Caco-2 (cell line): ENCODE measurements at regions of chr17 and their contacts with region 1.

Region 1: GRCh38 chr17:43170766-43171585 is at the start of gene NBR1:
- DNase-seq: peak; percentile 97 to 98
- H3K4me3 ChIP-seq: peak within 1 kb of the TSS; percentile 59
- H3K4me3 Mint-ChIP-seq: no peak within 1 kb of the TSS
- H3K27ac Mint-ChIP-seq: no peak within 1 kb of the TSS
- H3K4me1 ChIP-seq: peaks cover 39% of the 10 kb centered on the region
- H3K4me1 Mint-ChIP-seq: peaks cover 27% of the 10 kb centered on the region
- H3K27me3 ChIP-seq: no peaks in the 10 kb centered on the region
- H3K27me3 Mint-ChIP-seq: no peaks in the 10 kb centered on the region
- CTCF ChIP-seq: peak; percentile 24 to 44
- total RNA-seq, gene NBR1: 53.9 and 55.4 TPM in 2 replicates

Region 2: DNA sequence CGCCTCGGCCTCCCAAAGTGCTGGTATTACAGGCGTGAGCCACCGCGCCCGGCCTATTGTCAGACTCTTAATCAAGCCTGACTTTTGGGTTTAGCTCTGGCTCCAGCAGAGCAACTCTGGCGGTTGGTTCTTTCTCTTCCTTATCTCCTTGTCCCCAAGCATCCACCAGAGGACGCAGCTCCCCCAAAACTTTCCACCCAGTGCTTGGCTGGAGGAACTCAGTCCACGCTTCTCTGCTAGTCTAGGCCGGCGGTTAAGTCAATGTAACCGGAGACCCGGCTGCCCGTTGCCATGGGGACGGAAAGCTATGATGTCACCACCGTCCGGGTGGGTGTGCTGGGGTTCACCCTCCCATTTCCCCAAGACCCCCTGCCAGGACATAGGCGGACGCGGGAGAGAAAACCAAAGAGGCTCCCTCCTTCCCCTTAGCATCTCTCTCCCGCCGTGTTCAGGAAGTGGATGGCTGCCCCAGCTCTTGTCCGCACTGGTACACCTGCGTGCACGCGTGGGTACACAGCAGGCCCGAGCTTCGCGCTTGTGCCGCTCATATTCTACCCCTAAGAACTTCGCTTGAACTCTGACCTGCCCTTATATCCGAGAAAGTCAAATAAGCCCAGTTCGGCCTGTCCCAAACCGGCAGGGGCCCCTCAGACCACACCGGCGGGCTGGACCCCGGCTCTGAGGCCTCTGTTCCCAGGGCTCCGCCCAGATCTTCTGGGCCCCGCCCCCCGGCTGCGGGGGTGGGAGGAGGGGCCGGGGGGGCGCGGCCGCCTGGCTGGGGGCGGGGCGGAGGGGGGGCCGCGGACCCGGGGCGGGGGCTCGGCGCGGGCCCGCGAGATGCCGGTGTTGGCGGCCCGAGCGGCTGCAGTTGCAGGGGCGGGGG is 146.3 kb before region 1 on chr17 and contains the start of gene RND2:
- CTCF ChIA-PET with region 1: no interaction called
- POLR2A ChIA-PET with region 1: interaction called, 3 read pairs
- intact Hi-C with region 1: loop called (anchors 1 kb)
- DNase-seq: peak; percentile 85 to 88
- H3K4me3 ChIP-seq: peak within 1 kb of the TSS; percentile 53
- H3K4me3 Mint-ChIP-seq: peak within 1 kb of the TSS; percentile 69
- H3K27ac Mint-ChIP-seq: peak within 1 kb of the TSS; percentile 85
- H3K4me1 ChIP-seq: peaks cover 12% of the 10 kb centered on the region
- H3K4me1 Mint-ChIP-seq: peaks cover 2% of the 10 kb centered on the region
- H3K27me3 ChIP-seq: no peaks in the 10 kb centered on the region
- H3K27me3 Mint-ChIP-seq: no peaks in the 10 kb centered on the region
- CTCF ChIP-seq: peak; percentile 34 to 79
- total RNA-seq, gene RND2: 1.2 and 1.7 TPM in 2 replicates

Region 3: GRCh38 chr17:43125133-43125966 is 45.6 kb before region 1 on chr17 and contains the start of gene BRCA1:
- CTCF ChIA-PET with region 1: interaction called, 3 read pairs
- POLR2A ChIA-PET with region 1: interaction called, 10 read pairs
- intact Hi-C with region 1: loop called (anchors 1 kb)
- DNase-seq: peak; percentile 98 to 99
- H3K4me3 ChIP-seq: peak within 1 kb of the TSS; percentile 90
- H3K4me3 Mint-ChIP-seq: peak within 1 kb of the TSS; percentile 98
- H3K27ac Mint-ChIP-seq: peak within 1 kb of the TSS; percentile 99
- H3K4me1 ChIP-seq: peaks cover 18% of the 10 kb centered on the region
- H3K4me1 Mint-ChIP-seq: no peaks in the 10 kb centered on the region
- H3K27me3 ChIP-seq: no peaks in the 10 kb centered on the region
- H3K27me3 Mint-ChIP-seq: no peaks in the 10 kb centered on the region
- CTCF ChIP-seq: no peak
- total RNA-seq, gene BRCA1: 50.8 and 51.1 TPM in 2 replicates

Region 4: DNA sequence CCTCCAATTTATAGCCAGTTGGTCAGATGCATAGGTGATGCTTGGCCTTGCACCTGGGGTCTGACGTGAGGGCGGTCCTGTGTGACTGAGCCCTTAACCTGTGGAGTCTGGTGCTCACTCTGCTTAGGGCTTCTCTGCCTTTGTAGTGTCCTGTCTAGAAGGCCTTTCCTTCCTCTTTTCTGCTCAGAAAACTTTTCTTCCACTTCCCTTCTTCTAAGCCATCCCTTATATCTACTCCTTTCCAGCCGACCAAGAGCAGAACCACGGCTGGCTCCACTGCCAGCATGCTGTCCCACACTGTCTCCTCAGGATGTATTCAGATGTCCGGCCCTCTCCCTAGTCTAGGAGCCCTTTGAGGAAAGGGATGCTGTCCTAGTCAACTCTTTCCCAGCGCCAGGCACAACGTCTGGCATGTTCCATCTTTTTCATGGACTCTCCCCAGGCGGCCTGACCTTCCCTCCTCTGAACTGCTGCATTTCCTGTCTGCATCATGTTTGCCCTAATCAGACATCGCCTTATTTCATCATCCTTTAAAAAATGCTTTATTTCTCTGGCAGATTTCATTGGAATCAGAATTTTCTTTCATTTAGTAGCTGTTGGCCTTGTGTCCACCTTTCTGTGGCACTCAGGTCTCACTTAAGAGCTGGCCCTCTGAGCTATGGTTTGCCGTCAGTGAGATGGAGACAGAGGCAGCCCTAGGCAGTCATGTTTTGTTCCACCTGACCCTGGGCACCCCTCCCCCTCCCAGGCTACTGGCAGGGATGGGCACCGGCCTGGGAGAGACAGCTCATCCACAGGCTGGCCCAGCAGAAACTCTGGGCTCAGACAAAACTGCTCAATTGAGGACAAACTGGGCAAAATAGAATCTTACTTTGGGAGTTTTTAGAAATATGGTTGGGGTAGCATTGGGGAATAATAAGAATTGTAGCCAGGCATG is 30.3 kb before region 1 on chr17:
- CTCF ChIA-PET with region 1: no interaction called
- POLR2A ChIA-PET with region 1: no interaction called
- intact Hi-C with region 1: no loop called
- DNase-seq: no peak
- H3K4me3 ChIP-seq: no peak overlapping the region
- H3K4me3 Mint-ChIP-seq: no peak overlapping the region
- H3K27ac Mint-ChIP-seq: no peak overlapping the region
- H3K4me1 ChIP-seq: no peaks in the 10 kb centered on the region
- H3K4me1 Mint-ChIP-seq: peaks cover 7% of the 10 kb centered on the region
- H3K27me3 ChIP-seq: no peaks in the 10 kb centered on the region
- H3K27me3 Mint-ChIP-seq: no peaks in the 10 kb centered on the region
- CTCF ChIP-seq: no peak

Region 5: DNA sequence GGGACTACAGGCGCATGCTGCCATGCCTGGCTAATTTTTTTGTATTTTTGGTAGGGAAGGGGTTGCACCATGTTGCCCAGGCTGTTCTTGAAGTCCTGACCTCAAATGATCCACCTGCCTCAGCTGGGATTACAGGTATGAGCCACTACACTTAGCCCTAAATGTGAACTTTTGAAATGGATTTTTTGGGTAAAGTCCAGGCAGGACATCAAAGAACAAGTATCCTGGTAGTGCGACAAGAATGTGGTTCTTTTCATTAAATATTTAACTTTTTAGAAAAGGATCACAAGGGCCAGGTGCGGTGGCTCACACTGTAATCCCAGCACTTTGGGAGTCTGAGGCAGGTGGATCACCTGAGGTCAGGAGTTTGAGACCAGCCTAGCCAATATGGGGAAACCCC is 15.3 kb before region 1 on chr17:
- CTCF ChIA-PET with region 1: interaction called, 9 read pairs
- POLR2A ChIA-PET with region 1: interaction called, 4 read pairs
- intact Hi-C with region 1: loop called (anchors 1 kb)
- DNase-seq: peak; percentile 55 to 61
- H3K4me3 ChIP-seq: no peak overlapping the region
- H3K4me3 Mint-ChIP-seq: no peak overlapping the region
- H3K27ac Mint-ChIP-seq: no peak overlapping the region
- H3K4me1 ChIP-seq: peaks cover 18% of the 10 kb centered on the region
- H3K4me1 Mint-ChIP-seq: peaks cover 8% of the 10 kb centered on the region
- H3K27me3 ChIP-seq: no peaks in the 10 kb centered on the region
- H3K27me3 Mint-ChIP-seq: no peaks in the 10 kb centered on the region
- CTCF ChIP-seq: no peak

Region 6: DNA sequence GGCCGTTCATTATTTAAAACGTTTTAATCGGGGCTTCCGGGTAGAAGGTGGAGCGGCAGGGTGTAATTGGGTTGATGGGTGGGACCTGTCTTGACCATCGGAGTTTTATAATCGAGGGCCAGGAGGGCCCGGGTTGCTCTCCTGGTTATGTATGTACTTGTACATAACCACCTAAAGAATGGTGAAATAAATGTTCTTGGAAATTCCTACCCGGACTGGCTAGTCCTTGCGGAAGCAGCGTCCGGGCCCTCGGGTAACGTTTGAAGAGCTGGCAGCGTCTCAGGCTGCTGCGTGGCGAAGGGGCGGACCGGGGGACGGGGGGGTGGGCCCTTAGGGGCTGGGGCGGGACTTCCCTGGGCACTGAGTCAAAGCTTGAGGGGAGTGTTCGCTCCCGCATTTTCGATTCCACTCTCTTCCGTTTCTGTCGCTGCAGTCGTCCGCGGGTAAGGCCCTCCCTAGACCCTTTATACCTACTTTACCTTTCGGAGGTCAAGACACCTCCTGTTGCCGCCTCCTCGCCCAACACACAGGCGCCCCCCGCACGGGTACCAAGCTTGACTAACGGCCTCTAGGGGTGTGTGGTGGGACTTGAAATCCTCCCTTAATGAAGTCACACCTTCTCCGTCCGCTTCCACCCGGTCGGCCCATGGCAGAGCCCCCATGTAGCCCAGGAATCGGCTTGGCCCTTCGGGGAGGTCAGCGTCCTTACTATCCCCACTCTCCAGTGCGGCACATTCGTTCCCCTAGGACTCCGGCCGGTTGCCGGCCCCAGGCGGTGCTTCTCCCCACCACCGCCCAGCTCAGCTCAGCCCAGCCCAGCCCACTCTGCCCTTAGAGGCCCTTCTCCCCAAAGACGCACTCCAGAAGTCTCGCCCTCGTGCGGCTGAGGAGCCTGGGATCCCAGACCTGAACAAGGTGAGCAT is 40.8 kb after region 1 on chr17 and contains the start of gene TMEM106A:
- CTCF ChIA-PET with region 1: interaction called, 10 read pairs
- POLR2A ChIA-PET with region 1: interaction called, 6 read pairs
- intact Hi-C with region 1: loop called (anchors 1 kb)
- DNase-seq: peak; percentile 66 to 68
- H3K4me3 ChIP-seq: peak within 1 kb of the TSS; percentile 55
- H3K4me3 Mint-ChIP-seq: peak within 1 kb of the TSS; percentile 92
- H3K27ac Mint-ChIP-seq: peak within 1 kb of the TSS; percentile 77
- H3K4me1 ChIP-seq: peaks cover 17% of the 10 kb centered on the region
- H3K4me1 Mint-ChIP-seq: peaks cover 10% of the 10 kb centered on the region
- H3K27me3 ChIP-seq: no peaks in the 10 kb centered on the region
- H3K27me3 Mint-ChIP-seq: no peaks in the 10 kb centered on the region
- CTCF ChIP-seq: peak in 1 of 2 experiments; percentile 29
- total RNA-seq, gene TMEM106A: 6.9 and 8.0 TPM in 2 replicates

Region 7: GRCh38 chr17:43360739-43361505 is 189.9 kb after region 1 on chr17:
- CTCF ChIA-PET with region 1: no interaction called
- POLR2A ChIA-PET with region 1: interaction called, 5 read pairs
- intact Hi-C with region 1: loop called (anchors 5 kb)
- DNase-seq: peak; percentile 95 to 99
- H3K4me3 ChIP-seq: peak overlapping the region; percentile 36
- H3K4me3 Mint-ChIP-seq: peak overlapping the region; percentile 70
- H3K27ac Mint-ChIP-seq: peak overlapping the region; percentile 99
- H3K4me1 ChIP-seq: peaks cover 14% of the 10 kb centered on the region
- H3K4me1 Mint-ChIP-seq: peaks cover 31% of the 10 kb centered on the region
- H3K27me3 ChIP-seq: no peaks in the 10 kb centered on the region
- H3K27me3 Mint-ChIP-seq: peaks cover 2% of the 10 kb centered on the region
- CTCF ChIP-seq: no peak